ENCODE measurements at regions of chr10 and their contacts with region 1.

Region 1: GRCh38 chr10:4849555-4850242 is 23.7 kb downstream of the AKR1E2 start:
- DNase-seq: peak; percentile 90

Region 2: GRCh38 chr10:4947635-4948596 is 98.2 kb after region 1 on chr10:
- intact Hi-C with region 1: loop called (anchors 5 kb)
- DNase-seq: no peak

Region 3: GRCh38 chr10:5094265-5095205 is 244.8 kb after region 1 on chr10 and contains the start of gene AKR1C3:
- intact Hi-C with region 1: loop called (anchors 1 kb)
- DNase-seq: no peak
- total RNA-seq, gene AKR1C3: 15.2 TPM

Region 4: GRCh38 chr10:5385224-5385623 is 535.5 kb after region 1 on chr10:
- intact Hi-C with region 1: loop called (anchors 10 kb)
- DNase-seq: no peak

Region 5: GRCh38 chr10:5434017-5434753 is 584.5 kb after region 1 on chr10:
- intact Hi-C with region 1: loop called (anchors 5 kb)
- DNase-seq: no peak